Adrenal gland (tissue), 19 donors: ENCODE measurements at regions of chr2 and their contacts with region 1.

Region 1: GRCh38 chr2:44955593-44956392 is 14.3 kb downstream of the SIX3 start:
- DNase-seq: peak; percentile 59 to 78 (median 70)
- H3K4me3 ChIP-seq: peak overlapping the region in 1 of 4 donors; percentile 9
- H3K27ac ChIP-seq: no peak overlapping the region
- H3K4me1 ChIP-seq: peaks cover 12 to 25% of the 10 kb centered on the region in 2 donors
- H3K27me3 ChIP-seq: peaks cover 47% of the 10 kb centered on the region
- CTCF ChIP-seq: peak; percentile 64 to 92 (median 78)
- POLR2A ChIP-seq: no peak

Region 2: GRCh38 chr2:44044281-44044720 is 911.5 kb before region 1 on chr2:
- intact Hi-C with region 1: loop called in 1 of 2 experiments (anchors 10 kb)
- DNase-seq: peak; percentile 82 to 92 (median 89)
- H3K4me3 ChIP-seq: no peak overlapping the region
- H3K27ac ChIP-seq: no peak overlapping the region
- H3K4me1 ChIP-seq: peaks cover 0 to 6% of the 10 kb centered on the region in 2 donors
- H3K27me3 ChIP-seq: no peaks in the 10 kb centered on the region
- CTCF ChIP-seq: peak; percentile 66 to 87 (median 84)
- POLR2A ChIP-seq: no peak

Region 3: GRCh38 chr2:44324971-44325426 is 630.8 kb before region 1 on chr2:
- intact Hi-C with region 1: no loop called
- DNase-seq: peak in 3 of 7 donors; percentile 7 to 29 (median 28)
- H3K4me3 ChIP-seq: no peak overlapping the region
- H3K27ac ChIP-seq: peak overlapping the region in 3 of 5 donors; percentile 19 to 44 (median 30)
- H3K4me1 ChIP-seq: peaks cover 9 to 17% of the 10 kb centered on the region in 2 donors
- H3K27me3 ChIP-seq: no peaks in the 10 kb centered on the region
- CTCF ChIP-seq: no peak
- POLR2A ChIP-seq: no peak

Region 4: GRCh38 chr2:44392338-44392943 is 563.4 kb before region 1 on chr2:
- intact Hi-C with region 1: loop called in 1 of 2 experiments (anchors 5 kb)
- DNase-seq: peak; percentile 19 to 74 (median 60)
- H3K4me3 ChIP-seq: no peak overlapping the region
- H3K27ac ChIP-seq: no peak overlapping the region
- H3K4me1 ChIP-seq: no peaks in the 10 kb centered on the region
- H3K27me3 ChIP-seq: no peaks in the 10 kb centered on the region
- CTCF ChIP-seq: peak; percentile 31 to 69 (median 43)
- POLR2A ChIP-seq: no peak

Region 5: GRCh38 chr2:44479122-44479887 is 476.5 kb before region 1 on chr2:
- intact Hi-C with region 1: loop called (anchors 2 to 10 kb)
- DNase-seq: peak; percentile 16 to 67 (median 47)
- H3K4me3 ChIP-seq: no peak overlapping the region
- H3K27ac ChIP-seq: no peak overlapping the region
- H3K4me1 ChIP-seq: no peaks in the 10 kb centered on the region
- H3K27me3 ChIP-seq: no peaks in the 10 kb centered on the region
- CTCF ChIP-seq: peak; percentile 97 to 100 (median 99)
- POLR2A ChIP-seq: no peak